PC-9 (cell line): ENCODE measurements at regions of chr9 and their contacts with region 1.

Region 1: DNA sequence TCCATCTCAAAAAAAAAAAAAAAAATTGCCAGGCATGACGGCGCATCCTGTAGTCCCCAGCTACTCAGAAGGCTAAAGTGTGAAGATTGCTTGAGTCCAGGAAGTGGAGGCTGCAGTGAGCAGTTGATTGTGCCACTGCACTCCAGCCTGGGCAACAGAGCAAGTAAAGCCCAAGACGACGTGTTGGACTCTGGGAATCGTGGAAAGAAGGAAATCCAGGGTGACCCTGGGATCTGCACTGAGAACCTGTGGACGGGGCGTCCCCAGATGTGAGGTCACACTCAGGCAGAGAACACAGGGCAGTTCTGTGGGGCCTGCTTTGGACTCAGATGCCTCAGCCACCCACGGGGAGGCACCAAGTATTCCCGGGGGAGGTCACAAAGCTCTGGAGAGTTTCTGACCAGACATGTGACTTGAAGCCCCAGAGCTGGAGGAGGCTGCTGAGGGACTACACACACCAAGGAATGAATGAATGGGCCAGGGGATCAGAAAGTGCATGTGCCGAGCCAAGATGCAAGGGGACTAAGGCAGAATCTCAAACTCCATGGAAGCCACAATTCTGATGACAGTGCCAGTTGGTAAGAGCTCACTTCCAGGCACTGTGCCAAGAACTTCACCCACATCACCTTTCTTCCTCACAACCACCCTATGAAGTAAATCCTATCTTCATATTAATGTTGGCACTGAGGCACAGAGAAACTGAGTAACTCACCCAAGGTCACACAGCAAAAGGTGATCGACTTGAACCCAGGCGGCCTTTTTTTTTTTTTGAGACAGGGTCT is 12.9 kb downstream of the DYNC2I2 start:
- DNase-seq: no peak
- H3K4me3 ChIP-seq: no peak overlapping the region
- H3K27ac ChIP-seq: no peak overlapping the region
- H3K4me1 ChIP-seq: no peaks in the 10 kb centered on the region
- H3K27me3 ChIP-seq: no peaks in the 10 kb centered on the region
- CTCF ChIP-seq: no peak

Region 2: DNA sequence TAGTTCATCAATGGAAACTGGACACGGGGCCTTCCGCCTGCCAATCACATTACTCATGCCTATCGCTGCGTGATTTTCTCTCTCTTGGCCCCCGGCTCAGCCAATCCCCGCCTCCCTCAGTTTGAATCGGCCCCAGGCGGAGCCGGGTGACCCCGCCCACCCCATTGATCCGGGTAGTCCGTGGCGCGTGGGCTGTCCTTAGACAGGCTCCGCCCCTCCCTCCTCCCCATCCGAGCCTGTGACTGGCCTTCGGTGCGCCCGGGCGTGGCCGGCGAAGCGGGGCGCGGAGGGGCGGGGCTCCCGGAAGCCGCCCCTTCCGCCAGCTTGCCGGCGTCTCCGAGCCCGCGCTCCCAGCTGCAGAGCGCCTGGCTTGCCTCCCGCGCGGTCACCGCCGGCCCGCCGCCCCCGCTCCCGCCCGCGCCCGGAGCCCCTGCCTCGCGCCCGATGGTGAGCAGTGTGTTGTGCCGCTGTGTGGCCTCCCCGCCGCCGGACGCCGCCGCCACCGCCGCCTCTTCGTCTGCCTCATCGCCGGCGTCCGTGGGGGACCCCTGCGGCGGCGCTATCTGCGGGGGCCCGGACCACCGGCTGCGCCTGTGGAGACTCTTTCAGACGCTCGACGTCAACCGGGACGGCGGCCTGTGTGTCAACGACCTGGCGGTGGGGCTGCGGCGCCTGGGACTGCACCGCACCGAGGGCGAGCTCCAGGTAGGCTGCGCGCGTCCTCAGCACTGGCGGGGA is 575.7 kb before region 1 on chr9 and contains the start of gene SLC25A25:
- CTCF ChIA-PET with region 1: no interaction called
- POLR2A ChIA-PET with region 1: no interaction called
- intact Hi-C with region 1: no loop called
- DNase-seq: peak; percentile 96 to 100
- H3K4me3 ChIP-seq: peak within 1 kb of the TSS; percentile 87
- H3K27ac ChIP-seq: peak within 1 kb of the TSS; percentile 94
- H3K4me1 ChIP-seq: peaks cover 42% of the 10 kb centered on the region
- H3K27me3 ChIP-seq: no peaks in the 10 kb centered on the region
- CTCF ChIP-seq: no peak
- total RNA-seq, gene SLC25A25: 11.7 and 13.4 TPM in 2 replicates

Region 3: GRCh38 chr9:128750926-128751595 is 107.4 kb after region 1 on chr9:
- CTCF ChIA-PET with region 1: no interaction called
- POLR2A ChIA-PET with region 1: interaction called, 12 read pairs
- intact Hi-C with region 1: no loop called
- DNase-seq: no peak
- H3K4me3 ChIP-seq: no peak overlapping the region
- H3K27ac ChIP-seq: no peak overlapping the region
- H3K4me1 ChIP-seq: no peaks in the 10 kb centered on the region
- H3K27me3 ChIP-seq: no peaks in the 10 kb centered on the region
- CTCF ChIP-seq: no peak

Region 4: GRCh38 chr9:130396581-130396980 is 1752.9 kb after region 1 on chr9:
- CTCF ChIA-PET with region 1: interaction called, 14 read pairs
- POLR2A ChIA-PET with region 1: no interaction called
- intact Hi-C with region 1: no loop called
- DNase-seq: no peak
- H3K4me3 ChIP-seq: no peak overlapping the region
- H3K27ac ChIP-seq: no peak overlapping the region
- H3K4me1 ChIP-seq: no peaks in the 10 kb centered on the region
- H3K27me3 ChIP-seq: no peaks in the 10 kb centered on the region
- CTCF ChIP-seq: no peak